Right lobe of liver (tissue), 6 donors: ENCODE measurements at regions of chr11 and their contacts with region 1.

Region 1: GRCh38 chr11:117946842-117947526 is 17.8 kb upstream of the TMPRSS13 start:
- DNase-seq: peak; percentile 84 to 88 (median 84)
- ATAC-seq: peak; percentile 92 to 97 (median 95)
- H3K4me3 ChIP-seq: no peak overlapping the region
- H3K27ac ChIP-seq: no peak overlapping the region
- H3K4me1 ChIP-seq: no peaks in the 10 kb centered on the region
- H3K27me3 ChIP-seq: no peaks in the 10 kb centered on the region
- CTCF ChIP-seq: peak; percentile 91 to 99 (median 96)
- POLR2A ChIP-seq: no peak

Region 2: GRCh38 chr11:117833401-117833891 is 113.5 kb before region 1 on chr11:
- intact Hi-C with region 1: loop called in 1 of 2 experiments (anchors 10 kb)
- DNase-seq: peak; percentile 63 to 88 (median 74)
- ATAC-seq: peak; percentile 57 to 80 (median 66)
- H3K4me3 ChIP-seq: no peak overlapping the region
- H3K27ac ChIP-seq: peak overlapping the region in 1 of 3 donors; percentile 24
- H3K4me1 ChIP-seq: no peaks in the 10 kb centered on the region
- H3K27me3 ChIP-seq: no peaks in the 10 kb centered on the region
- CTCF ChIP-seq: no peak
- POLR2A ChIP-seq: no peak

Region 3: GRCh38 chr11:118002541-118003423 is 55.8 kb after region 1 on chr11:
- intact Hi-C with region 1: no loop called
- DNase-seq: peak in 1 of 3 donors; percentile 40
- ATAC-seq: peak; percentile 24 to 42 (median 32)
- H3K4me3 ChIP-seq: no peak overlapping the region
- H3K27ac ChIP-seq: peak overlapping the region in 2 of 3 donors; percentile 52 to 63
- H3K4me1 ChIP-seq: no peaks in the 10 kb centered on the region
- H3K27me3 ChIP-seq: no peaks in the 10 kb centered on the region
- CTCF ChIP-seq: no peak
- POLR2A ChIP-seq: no peak